ENCODE measurements at regions of chr16 and their contacts with region 1.

Region 1: GRCh38 chr16:73878611-73879010 is 418.0 kb upstream of the PSMD7 start:
- DNase-seq: peak; percentile 27 to 78
- ATAC-seq: peak; percentile 75 to 76; a peak in 5 of 6 replicates
- H3K4me3 ChIP-seq: no peak overlapping the region
- H3K27ac ChIP-seq: no peak overlapping the region
- H3K4me1 ChIP-seq: no peaks in the 10 kb centered on the region
- CTCF ChIP-seq: peak; percentile 72
- EP300 ChIP-seq: no peak
- POLR2A ChIP-seq: no peak
- RAD21 ChIP-seq: peak; percentile 80 to 81

Region 2: DNA sequence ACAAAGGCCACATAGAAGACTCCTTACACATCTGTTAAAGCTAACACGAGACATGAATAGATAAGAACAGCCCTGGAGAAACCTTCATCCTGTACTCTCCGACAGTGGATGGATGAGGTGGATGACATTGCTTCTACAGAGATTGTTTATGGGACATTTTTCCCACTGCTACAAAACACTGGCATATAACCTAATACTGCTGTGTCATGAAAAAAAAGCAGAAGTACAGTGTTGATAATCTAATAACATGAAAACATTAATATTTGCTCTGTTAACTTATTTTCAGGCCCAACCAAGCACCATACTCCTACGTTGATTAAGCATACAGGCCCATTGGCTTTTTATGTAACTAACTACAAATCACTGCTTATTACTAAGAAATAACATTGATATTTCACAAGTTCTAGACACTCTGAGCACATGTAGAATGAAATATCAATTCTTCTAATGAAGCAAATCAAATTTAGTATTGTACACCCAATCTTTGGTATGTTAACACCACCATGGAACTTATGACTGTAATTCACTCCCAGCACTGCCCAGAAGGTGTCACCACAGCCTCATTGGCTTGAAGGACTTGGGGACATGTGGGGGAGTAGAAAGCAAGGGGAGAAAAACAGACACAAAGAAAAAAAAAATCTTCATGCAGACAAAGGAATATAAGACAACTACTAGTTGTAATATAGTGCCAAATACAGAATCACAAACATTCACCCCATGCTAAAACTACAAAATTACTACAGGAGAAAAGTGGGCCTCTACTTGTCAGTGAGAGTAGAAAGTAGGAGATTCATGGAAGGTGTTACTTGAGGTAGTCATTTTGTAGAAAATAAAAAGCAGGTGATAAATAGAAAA is 1376.6 kb before region 1 on chr16:
- CTCF ChIA-PET with region 1: interaction called, 12 read pairs
- POLR2A ChIA-PET with region 1: no interaction called
- DNase-seq: peak; percentile 48 to 73
- ATAC-seq: peak; percentile 90 to 91; a peak in 5 of 6 replicates
- H3K4me3 ChIP-seq: no peak overlapping the region
- H3K27ac ChIP-seq: no peak overlapping the region
- H3K4me1 ChIP-seq: no peaks in the 10 kb centered on the region
- CTCF ChIP-seq: peak; percentile 92
- EP300 ChIP-seq: no peak
- POLR2A ChIP-seq: no peak
- RAD21 ChIP-seq: peak; percentile 91 to 93

Region 3: DNA sequence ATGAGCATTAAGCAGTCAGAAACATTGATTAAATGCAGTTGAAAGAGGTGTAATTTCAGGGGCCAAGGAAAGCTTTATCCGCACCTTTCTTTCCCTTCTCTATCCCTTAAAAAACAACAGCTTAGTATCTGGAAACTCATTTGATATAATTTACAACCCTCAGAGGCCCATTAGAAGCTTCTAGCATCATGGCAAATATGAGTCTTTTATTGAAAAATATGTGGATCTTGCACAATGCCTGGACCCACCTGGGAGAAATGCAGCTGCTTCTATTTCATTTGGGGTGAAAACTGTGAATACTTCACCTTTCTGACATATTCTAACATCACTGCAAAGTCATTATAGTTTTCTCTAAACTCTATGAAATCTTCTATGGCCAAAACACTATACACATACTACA is 74.2 kb before region 1 on chr16:
- CTCF ChIA-PET with region 1: no interaction called
- POLR2A ChIA-PET with region 1: no interaction called
- DNase-seq: no peak
- ATAC-seq: no peak
- H3K4me3 ChIP-seq: no peak overlapping the region
- H3K27ac ChIP-seq: no peak overlapping the region
- H3K4me1 ChIP-seq: no peaks in the 10 kb centered on the region
- CTCF ChIP-seq: no peak
- EP300 ChIP-seq: no peak
- POLR2A ChIP-seq: no peak
- RAD21 ChIP-seq: no peak

Region 4: DNA sequence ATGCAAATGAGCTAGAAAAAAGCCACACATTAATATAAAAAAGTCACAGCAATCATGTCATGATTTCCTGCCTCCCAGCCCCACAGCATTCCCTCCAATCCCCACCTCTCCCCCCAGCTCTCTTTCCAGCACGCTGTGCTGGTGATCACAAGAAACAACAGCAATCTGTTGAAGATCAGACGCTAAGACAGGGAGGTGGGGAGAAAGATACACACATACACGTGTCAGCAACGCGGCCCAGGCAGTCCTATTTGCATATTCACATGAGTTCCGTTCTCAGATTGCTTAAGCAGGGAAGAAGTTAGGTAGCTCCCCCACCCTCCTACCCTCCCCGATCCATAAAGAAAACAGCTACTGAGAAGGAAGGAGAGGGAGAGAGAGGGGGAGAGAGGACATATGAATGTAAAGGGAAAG is 12.5 kb after region 1 on chr16:
- CTCF ChIA-PET with region 1: interaction called, 12 read pairs
- POLR2A ChIA-PET with region 1: no interaction called
- DNase-seq: no peak
- ATAC-seq: no peak
- H3K4me3 ChIP-seq: no peak overlapping the region
- H3K27ac ChIP-seq: no peak overlapping the region
- H3K4me1 ChIP-seq: no peaks in the 10 kb centered on the region
- CTCF ChIP-seq: no peak
- EP300 ChIP-seq: no peak
- POLR2A ChIP-seq: no peak
- RAD21 ChIP-seq: no peak

Region 5: GRCh38 chr16:74053826-74054225 is 175.2 kb after region 1 on chr16:
- CTCF ChIA-PET with region 1: no interaction called
- POLR2A ChIA-PET with region 1: no interaction called
- DNase-seq: no peak
- ATAC-seq: no peak
- H3K4me3 ChIP-seq: no peak overlapping the region
- H3K27ac ChIP-seq: no peak overlapping the region
- H3K4me1 ChIP-seq: no peaks in the 10 kb centered on the region
- CTCF ChIP-seq: no peak
- EP300 ChIP-seq: no peak
- POLR2A ChIP-seq: no peak
- RAD21 ChIP-seq: no peak